A549 (cell line): ENCODE measurements at regions of chr5 and their contacts with region 1.

Region 1: GRCh38 chr5:181184857-181185251 is 20.1 kb downstream of the TRIM7 start:
- DNase-seq: peak in 1 of 2 experiments; percentile 60
- ATAC-seq: no peak
- H3K4me3 ChIP-seq: peak overlapping the region; percentile 49
- H3K27ac ChIP-seq: peak overlapping the region; percentile 79 to 86
- H3K4me1 ChIP-seq: peaks cover 12% of the 10 kb centered on the region
- CTCF ChIP-seq: no peak
- EP300 ChIP-seq: no peak
- POLR2A ChIP-seq: no peak
- RAD21 ChIP-seq: no peak

Region 2: DNA sequence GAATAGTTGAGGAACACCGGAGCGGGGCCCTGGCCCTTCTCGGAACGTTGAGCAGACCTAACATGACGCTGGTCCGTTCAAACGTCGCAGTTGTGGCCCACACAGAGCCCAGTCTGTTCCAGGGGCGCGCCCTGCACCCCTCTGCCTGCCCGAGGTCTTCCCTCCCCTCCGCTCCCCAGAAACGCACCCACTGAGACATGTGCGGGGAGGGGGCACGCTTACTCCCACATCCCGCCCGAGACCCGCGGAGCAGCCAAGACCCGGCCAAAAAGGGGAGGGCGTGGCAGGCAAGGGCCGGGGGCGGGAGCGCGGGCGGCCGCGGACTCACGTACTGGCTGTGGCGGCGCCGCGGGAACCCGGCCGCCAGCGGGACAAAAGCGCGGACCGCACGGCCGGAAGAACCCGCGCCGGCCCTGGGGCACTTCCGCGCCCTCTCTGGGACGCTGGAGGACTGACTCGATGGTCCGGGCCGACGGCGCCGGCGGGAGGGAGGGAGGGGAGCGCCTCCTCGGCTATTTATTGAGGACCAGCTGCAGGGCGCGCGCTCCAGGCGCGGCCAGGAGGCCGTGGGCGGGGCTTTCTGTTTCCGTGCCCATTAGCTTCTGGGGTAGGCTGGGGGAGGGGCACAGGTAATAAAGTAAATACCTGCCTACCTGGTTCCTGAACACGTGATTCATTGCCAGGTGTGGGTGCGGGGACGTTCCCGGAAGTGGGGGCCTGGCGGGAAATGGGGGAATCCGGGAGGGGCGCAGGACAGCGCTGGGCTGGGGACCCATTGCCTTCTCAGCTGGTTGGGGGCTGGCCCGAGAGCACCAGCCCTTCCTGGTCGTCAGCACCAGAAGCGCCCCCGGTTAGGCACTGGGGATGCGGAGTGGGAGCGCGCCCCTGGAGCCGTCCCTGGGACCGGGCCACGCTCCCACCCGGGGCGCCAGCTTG is 323.7 kb before region 1 on chr5 and contains the start of gene ZFP62:
- CTCF ChIA-PET with region 1: interaction called, 3 read pairs
- POLR2A ChIA-PET with region 1: interaction called, 10 read pairs
- DNase-seq: peak; percentile 77 to 94
- ATAC-seq: peak; percentile 94 to 98
- H3K4me3 ChIP-seq: peak within 1 kb of the TSS; percentile 95
- H3K27ac ChIP-seq: peak within 1 kb of the TSS; percentile 97 to 98
- H3K4me1 ChIP-seq: peaks cover 19% of the 10 kb centered on the region
- CTCF ChIP-seq: no peak; the same call in 2 of the 3 replicates
- EP300 ChIP-seq: no peak
- POLR2A ChIP-seq: peak; percentile 21; the same call in 1 of the 2 replicates
- RAD21 ChIP-seq: no peak
- polyA plus RNA-seq, gene ZFP62: 19.2 and 23.4 TPM in 2 replicates

Region 3: DNA sequence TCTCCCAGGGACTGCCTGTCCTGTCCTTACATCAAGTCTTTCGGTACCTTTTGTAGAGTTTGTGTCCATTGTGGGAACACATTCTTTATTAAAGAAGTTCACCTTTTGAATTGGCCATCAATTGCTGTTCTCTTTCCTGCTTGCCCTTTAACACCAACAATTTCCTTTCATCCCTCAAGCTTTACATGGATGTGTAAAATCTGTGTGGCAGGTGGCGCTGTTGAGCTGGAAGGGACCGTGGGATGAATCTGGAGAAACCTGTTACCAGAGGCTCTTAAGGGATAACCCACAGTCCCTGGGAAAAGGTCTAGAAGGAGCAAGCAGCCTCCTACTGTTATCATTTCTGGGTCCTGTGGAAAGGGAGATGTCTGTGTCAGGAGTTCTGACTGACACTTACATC is 315.9 kb before region 1 on chr5:
- CTCF ChIA-PET with region 1: interaction called, 12 read pairs
- POLR2A ChIA-PET with region 1: no interaction called
- DNase-seq: peak; percentile 87 to 89
- ATAC-seq: peak; percentile 91 to 94
- H3K4me3 ChIP-seq: no peak overlapping the region
- H3K27ac ChIP-seq: 0 out of 6 replicates have a peak overlapping the region, but pooled peaks of 1 of the 2 experiments have one; percentile 19
- H3K4me1 ChIP-seq: peaks cover 33% of the 10 kb centered on the region
- CTCF ChIP-seq: peak; percentile 86
- EP300 ChIP-seq: no peak
- POLR2A ChIP-seq: no peak
- RAD21 ChIP-seq: peak; percentile 84 to 90

Region 4: DNA sequence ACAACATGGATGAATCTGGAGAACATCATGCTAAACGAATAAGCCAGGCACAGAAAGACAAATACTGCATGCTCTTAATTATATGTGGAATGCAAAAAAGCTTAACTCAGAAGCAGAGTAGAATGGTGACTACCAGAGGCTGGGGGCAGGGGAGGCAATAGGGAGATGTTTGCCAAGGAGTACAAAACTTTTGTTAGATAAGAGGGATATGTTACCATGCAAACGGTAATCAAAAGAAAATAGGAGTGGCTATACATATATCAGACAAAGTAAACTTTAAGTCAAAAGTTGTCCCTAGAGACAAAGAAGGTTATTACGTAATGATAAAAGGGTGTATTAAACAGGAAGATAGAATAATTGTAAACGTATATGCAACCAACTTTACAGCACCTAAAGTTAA is 214.0 kb before region 1 on chr5:
- CTCF ChIA-PET with region 1: no interaction called
- POLR2A ChIA-PET with region 1: no interaction called
- DNase-seq: no peak
- ATAC-seq: no peak
- H3K4me3 ChIP-seq: no peak overlapping the region
- H3K27ac ChIP-seq: no peak overlapping the region
- H3K4me1 ChIP-seq: no peaks in the 10 kb centered on the region
- CTCF ChIP-seq: no peak
- EP300 ChIP-seq: no peak
- POLR2A ChIP-seq: no peak
- RAD21 ChIP-seq: no peak

Region 5: DNA sequence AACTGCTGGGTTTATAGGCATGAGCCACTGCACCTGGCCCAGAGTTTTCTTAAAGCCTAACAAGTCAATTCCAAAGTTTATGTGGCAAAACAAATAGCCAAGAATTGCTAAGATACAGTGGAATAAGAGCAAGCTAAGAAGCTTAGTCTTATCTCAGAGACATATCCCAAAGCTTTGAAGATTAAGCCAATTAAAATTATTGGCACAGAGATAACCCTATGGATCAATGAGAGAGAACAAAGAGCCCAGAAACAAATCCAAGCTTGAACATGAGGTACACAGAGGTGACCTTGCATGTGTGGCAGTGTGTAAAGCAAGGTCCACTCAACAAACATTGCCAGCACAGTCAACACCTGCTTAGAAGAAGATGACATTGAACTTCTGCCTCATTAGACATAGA is 182.9 kb before region 1 on chr5:
- CTCF ChIA-PET with region 1: no interaction called
- POLR2A ChIA-PET with region 1: no interaction called
- DNase-seq: no peak
- ATAC-seq: no peak
- H3K4me3 ChIP-seq: no peak overlapping the region
- H3K27ac ChIP-seq: no peak overlapping the region
- H3K4me1 ChIP-seq: no peaks in the 10 kb centered on the region
- CTCF ChIP-seq: no peak
- EP300 ChIP-seq: no peak
- POLR2A ChIP-seq: no peak
- RAD21 ChIP-seq: no peak

Region 6: GRCh38 chr5:181167814-181168488 is 16.9 kb before region 1 on chr5:
- CTCF ChIA-PET with region 1: interaction called, 33 read pairs
- POLR2A ChIA-PET with region 1: interaction called, 34 read pairs
- DNase-seq: peak in 1 of 2 experiments; percentile 70
- ATAC-seq: no peak
- H3K4me3 ChIP-seq: peak overlapping the region; percentile 13; the same call in 1 of the 3 replicates
- H3K27ac ChIP-seq: 0 out of 6 replicates have a peak overlapping the region, but pooled peaks of 1 of the 2 experiments have one; percentile 33
- H3K4me1 ChIP-seq: peaks cover 29% of the 10 kb centered on the region
- CTCF ChIP-seq: peak; percentile 73
- EP300 ChIP-seq: no peak
- POLR2A ChIP-seq: no peak
- RAD21 ChIP-seq: peak; percentile 43 to 46; a peak in 4 of 5 replicates

Region 7: DNA sequence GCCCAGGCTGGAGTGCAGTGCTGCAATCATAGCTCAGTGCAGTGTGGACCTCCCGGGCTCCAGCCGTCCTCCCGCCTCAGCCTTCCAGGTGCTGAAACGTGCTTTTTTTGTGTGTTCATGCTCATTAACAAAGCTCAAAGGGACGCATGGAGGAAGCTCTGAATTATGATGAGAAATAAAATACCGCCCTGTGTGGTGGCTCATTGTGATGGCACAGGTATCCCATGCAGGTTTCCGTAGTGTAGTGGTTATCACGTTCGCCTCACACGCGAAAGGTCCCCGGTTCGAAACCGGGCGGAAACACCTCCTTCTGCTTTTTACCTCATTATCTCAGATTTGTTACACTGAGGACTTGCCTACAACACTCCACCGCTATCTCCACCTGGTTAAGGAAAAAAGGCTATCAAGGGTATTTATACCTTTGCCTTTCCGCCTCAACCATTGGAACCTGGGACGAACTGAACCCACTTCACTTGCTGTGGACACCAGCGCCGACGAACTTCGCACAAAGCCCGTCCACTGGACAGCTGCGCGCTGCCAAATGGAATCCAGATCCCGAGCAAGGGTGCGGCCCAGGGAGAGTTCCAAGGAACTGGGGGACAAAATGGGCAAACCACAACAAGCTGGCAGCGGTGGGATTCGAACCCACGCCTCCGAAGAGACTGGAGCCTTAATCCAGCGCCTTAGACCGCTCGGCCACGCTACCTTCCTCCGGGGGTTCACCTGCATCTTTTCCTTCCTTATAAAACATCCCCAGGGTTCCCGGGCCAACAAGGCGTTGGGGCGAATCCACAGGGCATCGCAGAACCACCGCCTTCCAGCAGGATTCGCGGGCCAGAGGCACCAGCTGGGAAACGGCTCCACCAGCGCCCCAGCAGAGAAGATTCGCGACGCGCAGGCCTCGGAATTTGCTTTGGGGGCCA is 11.2 kb before region 1 on chr5:
- CTCF ChIA-PET with region 1: interaction called, 33 read pairs
- POLR2A ChIA-PET with region 1: interaction called, 34 read pairs
- DNase-seq: peak; percentile 84 to 99
- ATAC-seq: peak; percentile 84 to 87
- H3K4me3 ChIP-seq: peak overlapping the region; percentile 50
- H3K27ac ChIP-seq: peak overlapping the region; percentile 76 to 87
- H3K4me1 ChIP-seq: peaks cover 21% of the 10 kb centered on the region
- CTCF ChIP-seq: peak; percentile 5; the same call in 1 of the 3 replicates
- EP300 ChIP-seq: no peak
- POLR2A ChIP-seq: no peak
- RAD21 ChIP-seq: 0 out of 5 replicates have a peak, but pooled peaks of 1 of the 2 experiments have one; percentile 1

Region 8: DNA sequence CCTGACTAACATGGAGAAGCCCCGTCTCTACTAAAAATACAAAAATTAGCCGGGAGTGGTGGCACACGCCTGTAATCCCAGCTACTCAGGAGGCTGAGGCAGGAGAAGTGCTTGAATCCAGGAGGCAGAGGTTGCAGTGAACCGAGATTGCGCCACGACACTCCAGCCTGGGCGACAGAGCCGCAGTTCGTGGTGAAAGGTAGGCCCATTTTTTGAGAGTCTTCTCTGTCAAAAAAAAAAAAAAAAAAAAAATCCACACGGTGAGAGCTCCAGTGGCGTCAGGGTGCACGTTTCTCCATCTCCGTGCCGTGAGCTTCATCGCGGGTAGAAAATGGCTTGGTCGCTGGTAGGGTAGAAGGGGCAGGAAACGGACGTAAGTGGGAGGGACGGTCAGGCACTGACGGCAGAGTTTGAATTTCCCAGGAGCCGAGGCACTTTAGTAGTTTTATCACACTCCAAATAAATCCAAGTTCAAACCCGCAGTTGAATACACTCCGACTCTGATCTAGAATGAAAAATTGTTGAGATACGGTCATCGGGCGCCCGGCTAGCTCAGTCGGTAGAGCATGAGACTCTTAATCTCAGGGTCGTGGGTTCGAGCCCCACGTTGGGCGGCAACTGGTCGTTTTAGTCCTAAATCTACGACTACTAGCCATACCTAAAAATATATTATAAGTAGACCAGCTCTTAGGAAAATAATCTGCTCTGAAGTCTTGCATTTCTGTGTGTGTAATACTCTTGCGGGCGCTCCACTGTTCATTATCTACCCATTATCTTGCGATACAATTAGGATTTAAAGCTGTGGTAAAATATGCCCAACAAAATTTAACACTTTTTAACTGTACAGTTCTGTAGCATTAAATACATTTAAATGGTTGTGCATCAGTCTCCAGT is 22.6 kb after region 1 on chr5:
- CTCF ChIA-PET with region 1: interaction called, 33 read pairs
- POLR2A ChIA-PET with region 1: interaction called, 159 read pairs
- DNase-seq: peak; percentile 60 to 96
- ATAC-seq: peak; percentile 51 to 66
- H3K4me3 ChIP-seq: peak overlapping the region; percentile 54
- H3K27ac ChIP-seq: peak overlapping the region; percentile 69 to 93
- H3K4me1 ChIP-seq: peaks cover 15% of the 10 kb centered on the region
- CTCF ChIP-seq: no peak
- EP300 ChIP-seq: no peak
- POLR2A ChIP-seq: peak; percentile 28
- RAD21 ChIP-seq: no peak

Region 9: GRCh38 chr5:181223058-181223728 is 38.3 kb after region 1 on chr5 and contains the start of gene TRIM41:
- CTCF ChIA-PET with region 1: interaction called, 5 read pairs
- POLR2A ChIA-PET with region 1: interaction called, 48 read pairs
- DNase-seq: peak; percentile 93 to 99
- ATAC-seq: peak; percentile 72 to 78
- H3K4me3 ChIP-seq: peak within 1 kb of the TSS; percentile 90
- H3K27ac ChIP-seq: peak within 1 kb of the TSS; percentile 95 to 98
- H3K4me1 ChIP-seq: peaks cover 16% of the 10 kb centered on the region
- CTCF ChIP-seq: no peak
- EP300 ChIP-seq: no peak
- POLR2A ChIP-seq: peak; percentile 60
- RAD21 ChIP-seq: 0 out of 5 replicates have a peak, but pooled peaks of 1 of the 2 experiments have one; percentile 15
- polyA plus RNA-seq, gene TRIM41: 17.0 and 22.7 TPM in 2 replicates